MCF 10A (cell line): ENCODE measurements at regions of chr9 and their contacts with region 1.

Region 1: DNA sequence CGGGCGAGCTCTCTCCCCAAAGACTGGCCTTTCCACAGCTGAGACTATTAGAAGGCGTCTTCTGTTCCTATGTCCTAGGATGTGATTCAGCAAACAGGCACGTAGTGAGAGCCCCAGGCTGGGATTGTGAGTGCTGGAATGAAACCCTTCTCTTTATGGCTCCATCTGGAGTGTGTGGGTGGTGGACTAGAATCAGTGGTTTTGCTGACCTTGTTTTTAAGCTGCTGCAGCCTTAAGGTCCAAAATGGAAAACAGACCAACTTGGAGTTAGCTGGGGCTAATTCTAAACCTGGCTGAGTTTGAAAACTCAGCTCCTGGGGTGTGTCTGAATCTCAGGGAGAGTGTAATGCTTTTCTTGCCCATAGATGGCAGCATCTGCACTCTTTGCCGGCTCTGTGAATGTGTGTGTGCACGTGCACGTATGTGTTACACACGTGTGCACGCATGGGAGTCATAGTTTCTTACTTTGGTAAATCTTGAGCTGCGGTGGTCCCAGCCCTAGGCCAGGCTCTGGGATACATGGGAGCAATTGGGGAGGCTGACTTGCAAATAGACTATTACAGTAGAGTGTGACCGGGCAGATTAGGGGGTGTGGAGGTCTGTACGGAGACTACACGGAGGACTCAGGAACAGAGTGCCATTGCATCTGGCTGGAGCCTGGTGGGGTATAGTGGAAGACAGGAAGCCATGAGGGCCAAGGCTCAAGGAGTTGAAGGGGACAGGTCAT is 10.7 kb downstream of the GSN start:
- DNase-seq: peak; percentile 94
- H3K4me3 Mint-ChIP-seq: peak overlapping the region; percentile 65
- H3K27ac Mint-ChIP-seq: peak overlapping the region; percentile 96
- H3K4me1 Mint-ChIP-seq: peaks cover 62% of the 10 kb centered on the region
- H3K27me3 Mint-ChIP-seq: no peaks in the 10 kb centered on the region
- CTCF ChIP-seq: peak; percentile 83

Region 2: GRCh38 chr9:121059998-121060636 is 218.6 kb before region 1 on chr9:
- CTCF ChIA-PET with region 1: no interaction called
- POLR2A ChIA-PET with region 1: no interaction called
- intact Hi-C with region 1: no loop called
- DNase-seq: peak; percentile 66
- H3K4me3 Mint-ChIP-seq: no peak overlapping the region
- H3K27ac Mint-ChIP-seq: no peak overlapping the region
- H3K4me1 Mint-ChIP-seq: no peaks in the 10 kb centered on the region
- H3K27me3 Mint-ChIP-seq: no peaks in the 10 kb centered on the region
- CTCF ChIP-seq: peak; percentile 53

Region 3: DNA sequence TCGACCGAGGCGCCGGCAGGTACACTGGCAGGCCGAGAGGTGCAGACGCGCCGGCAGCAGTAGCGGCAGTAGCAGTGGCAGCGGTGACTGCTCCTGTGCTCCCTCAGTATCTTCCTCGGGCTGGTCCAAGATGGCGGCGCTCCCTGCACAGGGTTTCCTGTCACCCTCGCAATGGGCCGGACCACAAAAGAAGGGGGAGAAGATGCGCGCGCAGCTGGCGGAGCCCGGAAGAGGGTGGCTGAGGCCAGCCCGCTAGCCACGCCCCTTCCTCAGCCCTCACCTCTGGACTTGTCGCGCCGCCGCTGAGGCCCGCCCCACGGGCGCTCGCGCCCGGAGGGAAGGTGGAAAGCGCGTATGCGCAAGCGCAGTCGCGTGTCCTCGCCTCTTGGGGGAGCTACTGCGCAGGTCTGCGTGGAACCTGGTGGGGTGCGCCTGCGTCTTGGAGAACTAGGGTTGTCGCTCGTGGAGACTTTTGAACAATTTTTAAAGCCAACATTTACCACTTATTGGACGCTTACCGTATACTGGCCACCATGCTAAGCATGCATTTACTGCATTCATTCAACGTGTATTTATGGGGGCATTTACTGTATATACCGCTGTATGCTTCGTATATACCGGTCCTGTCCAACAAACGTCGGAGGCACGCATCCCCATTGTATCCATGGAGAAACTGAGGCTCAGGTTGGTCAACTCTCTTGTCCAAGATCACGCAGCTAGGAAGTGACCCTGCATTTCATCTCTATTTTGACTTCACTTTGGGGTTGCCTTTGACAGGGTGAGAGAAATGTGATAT is 76.8 kb before region 1 on chr9 and contains the start of gene RAB14:
- CTCF ChIA-PET with region 1: interaction called, 14 read pairs
- POLR2A ChIA-PET with region 1: interaction called, 18 read pairs
- intact Hi-C with region 1: no loop called
- DNase-seq: peak; percentile 98
- H3K4me3 Mint-ChIP-seq: peak within 1 kb of the TSS; percentile 83
- H3K27ac Mint-ChIP-seq: peak within 1 kb of the TSS; percentile 81
- H3K4me1 Mint-ChIP-seq: peaks cover 26% of the 10 kb centered on the region
- H3K27me3 Mint-ChIP-seq: no peaks in the 10 kb centered on the region
- CTCF ChIP-seq: peak; percentile 47
- total RNA-seq, gene RAB14: 65.8 and 77.0 TPM in 2 replicates

Region 4: DNA sequence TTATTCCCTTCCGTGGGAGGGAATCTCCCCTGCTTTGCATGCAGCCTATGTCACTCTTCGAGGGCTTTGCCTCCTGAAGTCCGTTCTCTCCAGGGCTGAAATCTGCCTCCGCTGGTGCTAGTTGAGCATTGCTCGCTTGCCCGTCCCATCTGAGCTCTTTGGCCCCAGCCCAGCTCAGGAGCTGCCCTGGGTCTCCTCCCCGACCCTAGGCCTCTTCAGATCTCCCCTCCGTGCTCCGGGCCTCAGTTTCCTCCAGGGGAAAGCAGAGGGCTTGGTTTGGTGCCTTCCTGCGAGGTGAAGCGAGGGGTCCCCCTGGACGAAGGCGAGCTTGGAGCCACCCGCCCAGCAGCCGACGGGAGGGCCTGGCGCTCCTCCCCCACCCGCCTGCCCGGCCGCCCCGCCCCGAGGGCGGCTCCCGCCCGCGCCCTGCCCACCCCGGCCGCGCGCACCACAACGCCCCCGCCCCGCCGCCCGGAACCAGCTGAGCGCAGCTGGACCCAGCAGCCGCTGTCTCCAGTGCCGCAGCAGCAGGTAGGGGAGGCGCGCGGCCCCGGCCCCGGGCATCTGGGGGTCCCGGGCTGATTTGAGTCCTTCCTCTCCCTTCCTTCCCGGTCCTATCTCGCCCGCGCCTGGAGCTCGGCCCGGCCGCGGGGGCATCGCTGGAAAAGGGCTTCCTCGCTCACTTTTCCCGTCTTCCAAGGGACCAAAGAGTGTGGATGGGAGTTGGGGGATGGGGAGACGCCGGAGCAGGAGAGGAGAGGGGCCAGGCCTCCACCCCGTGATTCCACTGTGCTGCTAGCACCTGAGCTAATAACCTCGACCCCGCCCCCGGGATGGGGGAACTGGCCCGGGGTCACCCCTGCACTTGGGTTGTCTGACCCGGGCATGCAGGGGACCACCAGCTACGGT is 10.8 kb before region 1 on chr9 and contains the start of gene GSN:
- CTCF ChIA-PET with region 1: interaction called, 53 read pairs
- POLR2A ChIA-PET with region 1: interaction called, 71 read pairs
- intact Hi-C with region 1: no loop called
- DNase-seq: peak; percentile 49
- H3K4me3 Mint-ChIP-seq: peak within 1 kb of the TSS; percentile 75
- H3K27ac Mint-ChIP-seq: peak within 1 kb of the TSS; percentile 80
- H3K4me1 Mint-ChIP-seq: peaks cover 18% of the 10 kb centered on the region
- H3K27me3 Mint-ChIP-seq: no peaks in the 10 kb centered on the region
- CTCF ChIP-seq: no peak
- total RNA-seq, gene GSN: 21.9 and 24.9 TPM in 2 replicates

Region 5: GRCh38 chr9:121333950-121334562 is 55.4 kb after region 1 on chr9:
- CTCF ChIA-PET with region 1: interaction called, 11 read pairs
- POLR2A ChIA-PET with region 1: interaction called, 11 read pairs
- intact Hi-C with region 1: no loop called
- DNase-seq: no peak
- H3K4me3 Mint-ChIP-seq: no peak overlapping the region
- H3K27ac Mint-ChIP-seq: peak overlapping the region; percentile 68
- H3K4me1 Mint-ChIP-seq: peaks cover 13% of the 10 kb centered on the region
- H3K27me3 Mint-ChIP-seq: no peaks in the 10 kb centered on the region
- CTCF ChIP-seq: no peak

Region 6: GRCh38 chr9:121350993-121351561 is 72.4 kb after region 1 on chr9:
- CTCF ChIA-PET with region 1: interaction called, 11 read pairs
- POLR2A ChIA-PET with region 1: interaction called, 4 read pairs
- intact Hi-C with region 1: no loop called
- DNase-seq: peak; percentile 90
- H3K4me3 Mint-ChIP-seq: no peak overlapping the region
- H3K27ac Mint-ChIP-seq: no peak overlapping the region
- H3K4me1 Mint-ChIP-seq: peaks cover 52% of the 10 kb centered on the region
- H3K27me3 Mint-ChIP-seq: no peaks in the 10 kb centered on the region
- CTCF ChIP-seq: no peak

Region 7: DNA sequence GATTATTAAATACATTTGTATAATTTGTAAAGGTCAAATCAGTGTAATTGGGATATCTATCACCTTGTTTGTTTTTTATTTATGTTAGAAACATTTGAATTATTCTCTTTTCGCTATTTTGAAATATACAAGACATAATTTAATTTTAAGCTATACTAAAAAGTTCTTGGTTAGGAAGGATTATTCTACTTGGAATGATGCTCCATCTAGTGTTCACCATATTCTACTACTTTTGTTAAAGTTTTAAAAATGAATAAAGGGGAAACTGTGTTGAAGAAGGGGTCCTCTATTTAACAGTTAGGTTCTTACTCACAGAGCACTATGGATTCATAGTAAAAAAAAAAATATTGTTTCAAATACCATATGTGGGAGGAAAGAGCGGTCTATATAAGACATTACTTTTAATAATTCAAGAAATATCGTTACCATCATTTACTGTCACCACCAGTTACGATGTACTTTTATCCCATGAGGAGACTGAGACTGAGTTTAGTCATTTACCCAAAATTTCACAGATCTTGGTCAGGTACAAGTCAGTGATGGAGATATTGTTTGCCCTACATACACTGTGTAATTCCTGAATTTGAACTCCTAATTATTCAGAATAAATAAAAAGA is 97.6 kb after region 1 on chr9:
- CTCF ChIA-PET with region 1: interaction called, 28 read pairs
- POLR2A ChIA-PET with region 1: interaction called, 62 read pairs
- intact Hi-C with region 1: loop called (anchors 2 kb)
- DNase-seq: no peak
- H3K4me3 Mint-ChIP-seq: no peak overlapping the region
- H3K27ac Mint-ChIP-seq: no peak overlapping the region
- H3K4me1 Mint-ChIP-seq: peaks cover 28% of the 10 kb centered on the region
- H3K27me3 Mint-ChIP-seq: no peaks in the 10 kb centered on the region
- CTCF ChIP-seq: peak; percentile 45

Region 8: DNA sequence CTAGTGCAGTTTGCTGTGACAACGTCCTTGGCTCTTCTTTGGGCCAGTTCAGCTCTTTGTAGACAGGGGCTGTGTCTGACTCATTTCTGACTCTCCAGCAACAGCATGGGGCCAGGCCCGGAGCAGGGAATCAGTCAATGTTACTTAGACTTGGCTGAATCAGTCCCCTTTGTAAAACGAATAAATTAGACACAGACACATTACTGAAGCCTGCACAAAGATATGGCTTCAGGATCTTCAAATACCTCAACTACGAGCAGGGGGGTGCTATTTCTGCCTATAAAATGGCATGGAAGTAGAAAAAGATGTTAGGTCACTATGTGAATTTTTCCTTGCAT is 609.7 kb after region 1 on chr9:
- CTCF ChIA-PET with region 1: no interaction called
- POLR2A ChIA-PET with region 1: no interaction called
- intact Hi-C with region 1: no loop called
- DNase-seq: peak; percentile 61
- H3K4me3 Mint-ChIP-seq: no peak overlapping the region
- H3K27ac Mint-ChIP-seq: no peak overlapping the region
- H3K4me1 Mint-ChIP-seq: no peaks in the 10 kb centered on the region
- H3K27me3 Mint-ChIP-seq: no peaks in the 10 kb centered on the region
- CTCF ChIP-seq: no peak

Region 9: DNA sequence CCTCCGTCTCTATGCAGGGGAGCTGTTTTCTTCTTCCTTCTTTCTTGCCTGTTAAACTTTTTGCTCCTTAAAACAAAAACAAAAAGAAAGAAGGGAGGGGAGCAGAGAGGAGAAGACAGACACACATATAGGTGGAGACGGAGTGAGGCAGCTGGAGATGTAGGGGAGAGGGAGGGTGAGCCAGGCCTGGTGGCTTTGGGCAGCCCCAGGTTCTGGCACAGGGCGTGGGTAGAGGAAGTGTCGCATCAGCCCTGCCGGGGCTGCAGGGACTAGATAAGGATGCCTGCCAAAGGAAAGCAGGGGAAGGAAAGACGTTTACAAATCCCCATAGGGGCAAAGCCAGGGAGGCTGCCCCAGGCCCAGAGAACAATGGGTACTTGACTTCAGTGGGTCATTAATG is 1053.4 kb after region 1 on chr9:
- CTCF ChIA-PET with region 1: no interaction called
- POLR2A ChIA-PET with region 1: no interaction called
- intact Hi-C with region 1: no loop called
- DNase-seq: no peak
- H3K4me3 Mint-ChIP-seq: no peak overlapping the region
- H3K27ac Mint-ChIP-seq: no peak overlapping the region
- H3K4me1 Mint-ChIP-seq: no peaks in the 10 kb centered on the region
- H3K27me3 Mint-ChIP-seq: no peaks in the 10 kb centered on the region
- CTCF ChIP-seq: no peak